Naive thymus-derived CD4-positive, alpha-beta T cell (primary cell): ENCODE measurements at regions of chr14 and their contacts with region 1.

Region 1: DNA sequence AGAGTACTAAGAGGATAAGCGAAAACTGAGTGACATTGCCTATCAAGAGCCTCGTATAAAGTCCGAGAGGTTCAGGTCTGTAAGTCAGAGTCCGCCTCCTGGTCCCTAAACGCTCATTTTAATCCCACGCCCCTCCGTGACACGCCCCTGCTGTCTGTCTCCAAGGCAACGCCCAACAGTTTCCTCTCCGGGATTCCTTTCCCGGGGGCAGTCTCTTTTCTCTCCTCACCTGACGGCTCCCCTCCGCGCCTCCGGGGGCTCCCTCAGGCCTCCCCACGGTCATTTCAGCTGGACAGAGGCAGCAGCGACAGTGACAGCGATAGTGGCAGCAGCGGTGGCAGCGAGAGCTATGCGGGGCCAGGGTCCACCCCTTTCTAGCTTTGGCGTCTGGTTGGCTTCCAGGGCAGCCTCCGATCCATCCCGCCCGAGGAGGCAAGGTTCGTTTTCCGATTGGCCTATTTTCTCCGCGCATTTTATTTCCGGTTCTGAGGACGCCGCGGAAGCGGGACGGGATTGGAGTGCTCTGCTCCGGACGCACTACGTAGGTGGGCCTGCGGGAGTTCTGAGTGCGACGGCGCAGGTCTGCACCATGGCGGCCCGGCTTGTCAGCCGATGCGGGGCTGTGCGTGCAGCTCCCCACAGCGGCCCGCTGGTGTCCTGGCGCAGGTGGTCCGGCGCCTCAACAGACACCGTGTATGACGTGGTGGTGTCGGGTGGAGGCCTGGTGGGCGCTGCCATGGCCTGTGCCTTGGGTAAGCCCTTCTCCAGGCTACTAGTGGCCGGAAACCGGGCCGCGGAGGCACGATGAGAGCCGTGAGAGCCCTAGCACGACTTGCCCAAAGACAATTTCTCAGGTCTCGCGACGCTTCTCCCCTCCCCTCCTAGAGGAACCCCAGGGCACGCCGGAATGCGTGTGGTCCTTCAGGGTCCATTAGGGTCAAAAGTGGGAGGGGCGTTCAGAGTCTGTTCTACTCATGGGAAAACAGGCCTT is at the starts of genes COQ6 and FAM161B:
- DNase-seq: peak; percentile 82 to 97 (median 95)
- ATAC-seq: peak; percentile 96
- H3K4me3 ChIP-seq: peak within 1 kb of the TSS; percentile 92
- H3K4me3 Mint-ChIP-seq: peak within 1 kb of the TSS; percentile 96 to 99 (median 98)
- H3K27ac ChIP-seq: peak within 1 kb of the TSS; percentile 94
- H3K27ac Mint-ChIP-seq: peak within 1 kb of the TSS; percentile 93 to 98 (median 95)
- H3K4me1 ChIP-seq: peaks cover 0 to 4% of the 10 kb centered on the region in 2 donors
- H3K4me1 Mint-ChIP-seq: peaks cover 5 to 34% (median 27%) of the 10 kb centered on the region in 7 donors
- H3K27me3 ChIP-seq: no peaks in the 10 kb centered on the region
- H3K27me3 Mint-ChIP-seq: no peaks in the 10 kb centered on the region
- total RNA-seq, gene COQ6: 22.8 to 47.3 (median 36.4) TPM
- total RNA-seq, gene FAM161B: 1.8 to 6.6 (median 3.7) TPM

Region 2: DNA sequence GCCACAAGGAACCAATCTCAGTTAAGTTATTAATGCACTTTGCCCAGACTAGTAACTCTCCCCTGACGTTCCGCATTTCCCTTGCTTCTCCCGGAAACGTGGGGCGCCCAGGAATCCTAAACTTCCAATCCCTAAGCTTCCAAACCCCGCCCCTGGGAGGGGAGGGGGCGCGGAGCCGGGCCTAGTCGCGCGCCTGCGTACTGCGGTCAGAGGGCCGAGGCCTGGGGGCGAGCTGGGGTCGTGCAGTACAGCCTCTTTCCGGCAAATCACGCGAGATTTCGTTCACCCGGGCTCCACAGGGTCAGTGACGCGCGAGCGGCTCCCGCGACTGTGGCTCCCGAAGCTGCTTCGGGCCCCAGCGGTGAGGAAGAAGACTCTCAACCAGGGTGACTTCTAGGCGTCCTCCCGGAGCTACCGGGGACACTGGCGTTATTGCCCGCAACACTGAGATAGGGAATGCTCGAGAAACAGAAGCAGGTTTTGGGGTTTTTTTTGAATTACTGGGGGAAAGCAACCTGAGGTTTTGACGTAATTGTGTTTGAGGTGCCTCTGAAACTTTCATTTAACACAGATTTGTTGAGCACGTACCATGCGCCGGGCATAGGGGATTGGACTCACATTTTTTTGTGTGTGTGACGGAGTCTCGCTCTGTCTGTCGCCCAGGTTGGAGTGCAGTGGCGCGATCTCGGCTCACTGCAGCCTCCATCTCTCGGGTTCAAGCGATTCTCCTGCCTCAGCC is 98.2 kb before region 1 on chr14 and contains the start of gene PTGR2:
- CTCF ChIA-PET with region 1: no interaction called
- POLR2A ChIA-PET with region 1: no interaction called
- intact Hi-C with region 1: loop called in 1 of 2 experiments (anchors 1 kb)
- DNase-seq: peak; percentile 79 to 92 (median 86)
- ATAC-seq: peak; percentile 98
- H3K4me3 ChIP-seq: peak within 1 kb of the TSS; percentile 76
- H3K4me3 Mint-ChIP-seq: peak within 1 kb of the TSS; percentile 88 to 99 (median 96)
- H3K27ac ChIP-seq: peak within 1 kb of the TSS; percentile 85
- H3K27ac Mint-ChIP-seq: peak within 1 kb of the TSS; percentile 92 to 99 (median 97)
- H3K4me1 ChIP-seq: peaks cover 8 to 9% of the 10 kb centered on the region in 2 donors
- H3K4me1 Mint-ChIP-seq: peaks cover 3 to 28% (median 21%) of the 10 kb centered on the region in 7 donors
- H3K27me3 ChIP-seq: no peaks in the 10 kb centered on the region
- H3K27me3 Mint-ChIP-seq: no peaks in the 10 kb centered on the region
- total RNA-seq, gene PTGR2: 1.2 to 7.9 (median 1.8) TPM

Region 3: GRCh38 chr14:73935666-73936065 is 14.4 kb before region 1 on chr14:
- CTCF ChIA-PET with region 1: no interaction called
- POLR2A ChIA-PET with region 1: interaction called, 12 read pairs
- intact Hi-C with region 1: no loop called
- DNase-seq: no peak
- ATAC-seq: no peak
- H3K4me3 ChIP-seq: no peak overlapping the region
- H3K4me3 Mint-ChIP-seq: no peak overlapping the region
- H3K27ac ChIP-seq: no peak overlapping the region
- H3K27ac Mint-ChIP-seq: peak overlapping the region in 4 of 9 donors; percentile 43 to 70 (median 50)
- H3K4me1 ChIP-seq: no peaks in the 10 kb centered on the region
- H3K4me1 Mint-ChIP-seq: peaks cover 5 to 13% (median 11%) of the 10 kb centered on the region in 7 donors
- H3K27me3 ChIP-seq: no peaks in the 10 kb centered on the region
- H3K27me3 Mint-ChIP-seq: no peaks in the 10 kb centered on the region

Region 4: DNA sequence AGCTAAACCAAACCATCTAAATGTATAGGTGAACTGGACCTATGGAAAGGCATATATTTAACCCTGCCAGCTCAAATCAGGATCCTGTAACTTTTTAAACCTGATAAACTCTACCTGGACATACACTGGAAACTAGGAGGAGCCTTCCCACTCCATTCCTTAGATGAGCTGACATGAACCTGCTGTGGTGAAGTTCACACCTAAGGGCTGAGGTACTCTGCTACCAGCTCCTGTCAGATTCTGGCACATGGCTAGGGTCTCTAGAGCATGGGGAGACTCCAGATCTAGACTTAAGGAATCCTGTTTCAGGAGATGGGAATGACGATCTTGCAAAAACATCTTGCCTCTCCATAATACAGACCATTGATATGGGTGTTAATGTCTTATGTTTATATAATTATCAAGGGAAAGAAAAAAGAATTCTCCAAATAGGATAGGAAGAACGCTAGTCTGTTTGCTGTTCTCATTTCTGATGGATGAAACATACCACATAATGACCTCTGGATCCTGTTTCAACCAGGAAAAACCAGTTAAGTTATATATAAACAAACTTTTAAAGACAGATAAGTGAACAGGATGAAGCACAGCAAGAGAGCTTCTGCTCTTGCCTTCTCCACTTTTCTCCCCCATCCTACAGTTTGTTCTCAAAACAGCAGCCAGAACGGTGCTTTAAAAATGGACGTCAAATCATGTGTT is 27.7 kb after region 1 on chr14:
- CTCF ChIA-PET with region 1: no interaction called
- POLR2A ChIA-PET with region 1: no interaction called
- intact Hi-C with region 1: no loop called
- DNase-seq: no peak
- ATAC-seq: no peak
- H3K4me3 ChIP-seq: no peak overlapping the region
- H3K4me3 Mint-ChIP-seq: no peak overlapping the region
- H3K27ac ChIP-seq: no peak overlapping the region
- H3K27ac Mint-ChIP-seq: no peak overlapping the region
- H3K4me1 ChIP-seq: no peaks in the 10 kb centered on the region
- H3K4me1 Mint-ChIP-seq: peaks cover 0 to 2% (median 0%) of the 10 kb centered on the region in 7 donors
- H3K27me3 ChIP-seq: no peaks in the 10 kb centered on the region
- H3K27me3 Mint-ChIP-seq: no peaks in the 10 kb centered on the region

Region 5: GRCh38 chr14:74018586-74019407 is 68.8 kb after region 1 on chr14 and contains the starts of genes BBOF1 and ENTPD5:
- CTCF ChIA-PET with region 1: no interaction called
- POLR2A ChIA-PET with region 1: interaction called, 9 read pairs
- intact Hi-C with region 1: loop called (anchors 1 kb)
- DNase-seq: peak; percentile 83 to 89 (median 88)
- ATAC-seq: peak; percentile 98
- H3K4me3 ChIP-seq: peak within 1 kb of the TSS; percentile 79
- H3K4me3 Mint-ChIP-seq: peak within 1 kb of the TSS; percentile 80 to 97 (median 94)
- H3K27ac ChIP-seq: peak within 1 kb of the TSS; percentile 93
- H3K27ac Mint-ChIP-seq: peak within 1 kb of the TSS; percentile 89 to 98 (median 96)
- H3K4me1 ChIP-seq: peaks cover 6 to 10% of the 10 kb centered on the region in 2 donors
- H3K4me1 Mint-ChIP-seq: peaks cover 7 to 24% (median 14%) of the 10 kb centered on the region in 7 donors
- H3K27me3 ChIP-seq: no peaks in the 10 kb centered on the region
- H3K27me3 Mint-ChIP-seq: peaks cover 0 to 2% (median 0%) of the 10 kb centered on the region in 5 donors
- total RNA-seq, gene BBOF1: 0.80 to 4.0 (median 2.6) TPM
- total RNA-seq, gene ENTPD5: 8.6 to 17.1 (median 11.2) TPM

Region 6: DNA sequence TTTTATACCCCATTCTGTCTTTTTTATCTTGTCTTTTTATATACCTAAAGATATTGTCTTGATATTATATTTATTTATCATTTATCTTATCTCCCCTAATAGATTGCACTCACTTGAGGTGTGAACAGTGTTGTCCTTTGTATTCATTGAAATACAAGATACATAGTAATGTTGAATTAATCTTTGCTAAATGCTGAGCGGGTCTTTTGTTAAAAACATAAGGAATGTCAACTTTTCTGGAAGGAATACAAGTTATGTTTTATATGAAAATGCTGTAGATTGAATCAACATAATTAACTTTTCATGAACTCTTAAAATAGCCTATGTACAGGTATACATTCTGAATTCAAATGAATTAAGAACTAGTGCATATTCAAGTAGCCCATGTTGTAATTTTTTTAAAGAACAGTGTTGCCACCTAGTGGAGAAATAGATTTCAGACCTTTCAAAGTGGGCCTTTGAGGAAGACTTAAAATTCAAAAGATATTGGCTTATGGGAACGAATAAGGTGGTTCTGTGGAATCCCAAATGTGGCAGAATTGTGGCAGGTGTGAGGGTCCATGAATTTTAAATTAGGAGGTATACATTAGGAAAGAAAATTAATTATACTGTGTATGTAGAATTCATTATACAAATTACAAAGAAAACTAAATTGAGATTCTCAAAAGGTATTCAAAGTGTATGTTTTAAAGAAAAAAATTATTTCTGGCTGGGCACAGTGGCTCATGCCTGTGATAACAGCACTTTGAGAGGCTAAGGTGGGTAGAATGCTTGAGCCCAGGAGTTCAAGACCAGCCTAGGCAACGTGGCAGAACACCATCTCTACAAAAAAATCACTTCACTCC is 88.2 kb after region 1 on chr14:
- CTCF ChIA-PET with region 1: no interaction called
- POLR2A ChIA-PET with region 1: no interaction called
- intact Hi-C with region 1: loop called in 1 of 2 experiments (anchors 1 kb)
- DNase-seq: peak in 7 of 9 donors; percentile 19 to 63 (median 49)
- ATAC-seq: peak; percentile 65
- H3K4me3 ChIP-seq: no peak overlapping the region
- H3K4me3 Mint-ChIP-seq: no peak overlapping the region
- H3K27ac ChIP-seq: no peak overlapping the region
- H3K27ac Mint-ChIP-seq: peak overlapping the region in 1 of 9 donors; percentile 29
- H3K4me1 ChIP-seq: no peaks in the 10 kb centered on the region
- H3K4me1 Mint-ChIP-seq: no peaks in the 10 kb centered on the region
- H3K27me3 ChIP-seq: no peaks in the 10 kb centered on the region
- H3K27me3 Mint-ChIP-seq: no peaks in the 10 kb centered on the region

Region 7: GRCh38 chr14:74048281-74048680 is 98.2 kb after region 1 on chr14:
- CTCF ChIA-PET with region 1: no interaction called
- POLR2A ChIA-PET with region 1: no interaction called
- intact Hi-C with region 1: no loop called
- DNase-seq: no peak
- ATAC-seq: no peak
- H3K4me3 ChIP-seq: no peak overlapping the region
- H3K4me3 Mint-ChIP-seq: no peak overlapping the region
- H3K27ac ChIP-seq: no peak overlapping the region
- H3K27ac Mint-ChIP-seq: no peak overlapping the region
- H3K4me1 ChIP-seq: no peaks in the 10 kb centered on the region
- H3K4me1 Mint-ChIP-seq: no peaks in the 10 kb centered on the region
- H3K27me3 ChIP-seq: no peaks in the 10 kb centered on the region
- H3K27me3 Mint-ChIP-seq: no peaks in the 10 kb centered on the region